ENCODE measurements at regions of chr1 and their contacts with region 1.

Region 1: GRCh38 chr1:154272217-154272998 is at the start of gene HAX1:
- DNase-seq: peak; percentile 99
- ATAC-seq: peak; percentile 93
- H3K4me3 Mint-ChIP-seq: peak within 1 kb of the TSS; percentile 92
- H3K27ac Mint-ChIP-seq: peak within 1 kb of the TSS; percentile 96
- H3K4me1 Mint-ChIP-seq: peaks cover 37% of the 10 kb centered on the region
- H3K27me3 Mint-ChIP-seq: no peaks in the 10 kb centered on the region
- total RNA-seq, gene HAX1: 104 to 123 TPM

Region 2: GRCh38 chr1:154198756-154199562 is 73.4 kb before region 1 on chr1:
- CTCF ChIA-PET with region 1: interaction called, 24 read pairs
- DNase-seq: peak; percentile 58
- ATAC-seq: peak; percentile 77
- H3K4me3 Mint-ChIP-seq: no peak overlapping the region
- H3K27ac Mint-ChIP-seq: no peak overlapping the region
- H3K4me1 Mint-ChIP-seq: peaks cover 3% of the 10 kb centered on the region
- H3K27me3 Mint-ChIP-seq: peaks cover 10% of the 10 kb centered on the region

Region 3: DNA sequence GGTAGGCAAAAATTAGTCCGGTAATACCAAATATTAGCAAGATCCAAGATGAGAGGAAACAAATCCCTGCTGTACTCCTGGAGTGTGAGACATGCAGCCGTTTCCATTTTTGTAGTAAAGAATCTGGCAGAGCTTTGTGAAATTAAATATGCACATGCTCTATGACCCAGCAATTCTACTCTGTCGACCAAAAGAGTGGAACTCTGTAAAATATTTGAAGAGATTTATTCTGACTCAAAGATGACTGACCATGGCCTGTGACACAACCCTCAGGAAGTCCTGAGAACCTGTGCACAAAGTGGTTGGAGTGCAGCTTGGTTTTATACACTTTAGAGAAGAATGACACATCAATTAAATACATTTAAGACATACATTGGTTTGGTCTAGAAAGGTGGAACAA is 16.3 kb after region 1 on chr1:
- CTCF ChIA-PET with region 1: no interaction called
- DNase-seq: no peak
- ATAC-seq: no peak
- H3K4me3 Mint-ChIP-seq: no peak overlapping the region
- H3K27ac Mint-ChIP-seq: no peak overlapping the region
- H3K4me1 Mint-ChIP-seq: no peaks in the 10 kb centered on the region
- H3K27me3 Mint-ChIP-seq: peaks cover 5% of the 10 kb centered on the region

Region 4: DNA sequence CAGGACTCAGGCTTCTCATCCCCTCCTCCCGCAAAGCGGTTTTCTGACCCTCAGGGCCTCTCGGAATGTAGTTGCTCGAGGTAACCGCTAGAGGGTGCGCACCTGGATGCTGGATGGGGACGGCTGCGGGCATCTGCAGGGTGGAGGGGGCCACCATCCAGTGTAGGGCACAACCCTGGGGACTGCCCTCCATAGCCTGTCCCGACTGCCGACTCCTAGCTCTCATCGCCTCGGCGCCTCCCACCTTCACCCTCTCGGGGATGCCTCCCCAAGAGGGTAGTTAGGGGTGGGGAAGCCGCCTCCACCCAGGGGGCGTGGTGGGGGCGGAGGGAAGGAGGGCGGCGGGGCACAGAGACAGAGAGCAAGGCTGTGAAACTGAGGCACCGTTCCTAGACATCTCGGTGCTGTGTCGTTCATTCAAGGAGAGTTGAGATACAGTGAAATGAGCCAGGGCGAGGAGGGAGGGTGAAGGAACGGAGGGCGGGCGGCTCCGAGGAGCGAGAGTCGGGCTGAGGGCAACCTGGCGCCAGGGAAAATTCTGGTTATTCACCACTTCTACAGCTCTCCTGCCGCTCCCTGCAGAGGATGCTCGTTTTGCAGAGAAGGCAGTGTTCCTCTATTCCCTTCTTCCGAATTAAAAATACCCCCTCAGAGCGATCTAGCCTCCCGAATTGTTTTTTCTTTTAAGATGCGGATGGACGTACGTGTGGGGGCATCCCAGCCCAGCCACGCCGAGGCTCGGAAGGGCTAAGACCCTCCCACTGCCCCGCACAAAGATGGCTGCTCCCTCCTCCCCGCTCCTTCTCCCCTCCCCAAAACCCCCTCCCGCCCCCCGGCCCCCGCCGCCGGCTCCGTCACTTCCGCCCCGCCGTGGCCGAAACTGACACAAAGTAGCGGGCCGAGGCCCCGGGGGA is 52.5 kb after region 1 on chr1 and contains the start of gene ATP8B2:
- CTCF ChIA-PET with region 1: interaction called, 15 read pairs
- DNase-seq: peak; percentile 88
- ATAC-seq: peak; percentile 56
- H3K4me3 Mint-ChIP-seq: peak within 1 kb of the TSS; percentile 90
- H3K27ac Mint-ChIP-seq: peak within 1 kb of the TSS; percentile 90
- H3K4me1 Mint-ChIP-seq: peaks cover 39% of the 10 kb centered on the region
- H3K27me3 Mint-ChIP-seq: peaks cover 17% of the 10 kb centered on the region
- total RNA-seq, gene ATP8B2: 46.3 to 67.3 TPM

Region 5: GRCh38 chr1:154335025-154335714 is 62.8 kb after region 1 on chr1:
- CTCF ChIA-PET with region 1: interaction called, 24 read pairs
- DNase-seq: peak; percentile 95
- ATAC-seq: peak; percentile 90
- H3K4me3 Mint-ChIP-seq: peak overlapping the region; percentile 12
- H3K27ac Mint-ChIP-seq: peak overlapping the region; percentile 78
- H3K4me1 Mint-ChIP-seq: peaks cover 57% of the 10 kb centered on the region
- H3K27me3 Mint-ChIP-seq: no peaks in the 10 kb centered on the region